Lower leg skin (tissue), 4 donors: ENCODE measurements at regions of chr5 and their contacts with region 1.

Region 1: DNA sequence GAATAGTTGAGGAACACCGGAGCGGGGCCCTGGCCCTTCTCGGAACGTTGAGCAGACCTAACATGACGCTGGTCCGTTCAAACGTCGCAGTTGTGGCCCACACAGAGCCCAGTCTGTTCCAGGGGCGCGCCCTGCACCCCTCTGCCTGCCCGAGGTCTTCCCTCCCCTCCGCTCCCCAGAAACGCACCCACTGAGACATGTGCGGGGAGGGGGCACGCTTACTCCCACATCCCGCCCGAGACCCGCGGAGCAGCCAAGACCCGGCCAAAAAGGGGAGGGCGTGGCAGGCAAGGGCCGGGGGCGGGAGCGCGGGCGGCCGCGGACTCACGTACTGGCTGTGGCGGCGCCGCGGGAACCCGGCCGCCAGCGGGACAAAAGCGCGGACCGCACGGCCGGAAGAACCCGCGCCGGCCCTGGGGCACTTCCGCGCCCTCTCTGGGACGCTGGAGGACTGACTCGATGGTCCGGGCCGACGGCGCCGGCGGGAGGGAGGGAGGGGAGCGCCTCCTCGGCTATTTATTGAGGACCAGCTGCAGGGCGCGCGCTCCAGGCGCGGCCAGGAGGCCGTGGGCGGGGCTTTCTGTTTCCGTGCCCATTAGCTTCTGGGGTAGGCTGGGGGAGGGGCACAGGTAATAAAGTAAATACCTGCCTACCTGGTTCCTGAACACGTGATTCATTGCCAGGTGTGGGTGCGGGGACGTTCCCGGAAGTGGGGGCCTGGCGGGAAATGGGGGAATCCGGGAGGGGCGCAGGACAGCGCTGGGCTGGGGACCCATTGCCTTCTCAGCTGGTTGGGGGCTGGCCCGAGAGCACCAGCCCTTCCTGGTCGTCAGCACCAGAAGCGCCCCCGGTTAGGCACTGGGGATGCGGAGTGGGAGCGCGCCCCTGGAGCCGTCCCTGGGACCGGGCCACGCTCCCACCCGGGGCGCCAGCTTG is at the start of gene ZFP62:
- DNase-seq: peak; percentile 78 to 96
- H3K4me3 ChIP-seq: peak within 1 kb of the TSS; percentile 93
- CTCF ChIP-seq: no peak
- POLR2A ChIP-seq: no peak
- total RNA-seq, gene ZFP62: 14.5 to 35.8 (median 31.1) TPM

Region 2: GRCh38 chr5:181159286-181159829 is 298.2 kb after region 1 on chr5:
- intact Hi-C with region 1: loop called (anchors 10 kb)
- DNase-seq: peak; percentile 83 to 98
- H3K4me3 ChIP-seq: no peak overlapping the region
- CTCF ChIP-seq: peak in 1 of 3 donors; percentile 34
- POLR2A ChIP-seq: no peak